Endothelial cell of umbilical vein (primary cell): ENCODE measurements at regions of chr1 and their contacts with region 1.

Region 1: GRCh38 chr1:9292361-9293240 is at the start of gene SPSB1:
- DNase-seq: peak; percentile 79
- H3K4me3 ChIP-seq: peak within 1 kb of the TSS; percentile 38 to 67 (median 64)
- H3K27ac ChIP-seq: peak within 1 kb of the TSS; percentile 54
- H3K4me1 ChIP-seq: peaks cover 15% of the 10 kb centered on the region
- H3K27me3 ChIP-seq: no peaks in the 10 kb centered on the region
- CTCF ChIP-seq: no peak
- POLR2A ChIP-seq: peak; percentile 92
- total RNA-seq, gene SPSB1: 41.9 and 50.9 TPM in 2 replicates

Region 2: GRCh38 chr1:9166289-9167235 is 126.0 kb before region 1 on chr1:
- CTCF ChIA-PET with region 1: no interaction called
- POLR2A ChIA-PET with region 1: no interaction called
- dilution Hi-C with region 1: no loop called
- intact Hi-C with region 1: no loop called
- DNase-seq: peak; percentile 69
- H3K4me3 ChIP-seq: no peak overlapping the region
- H3K27ac ChIP-seq: peak overlapping the region; percentile 99
- H3K4me1 ChIP-seq: peaks cover 39% of the 10 kb centered on the region
- H3K27me3 ChIP-seq: no peaks in the 10 kb centered on the region
- CTCF ChIP-seq: no peak
- POLR2A ChIP-seq: no peak

Region 3: GRCh38 chr1:9302745-9303524 is 10.3 kb after region 1 on chr1:
- CTCF ChIA-PET with region 1: interaction called, 12 read pairs
- POLR2A ChIA-PET with region 1: no interaction called
- dilution Hi-C with region 1: no loop called
- intact Hi-C with region 1: loop called (anchors 1 kb)
- DNase-seq: peak; percentile 83
- H3K4me3 ChIP-seq: peak overlapping the region in 1 of 3 experiments; percentile 37
- H3K27ac ChIP-seq: peak overlapping the region; percentile 93
- H3K4me1 ChIP-seq: peaks cover 27% of the 10 kb centered on the region
- H3K27me3 ChIP-seq: no peaks in the 10 kb centered on the region
- CTCF ChIP-seq: no peak
- POLR2A ChIP-seq: peak; percentile 45

Region 4: GRCh38 chr1:9371391-9371935 is 78.9 kb after region 1 on chr1:
- CTCF ChIA-PET with region 1: interaction called, 9 read pairs
- POLR2A ChIA-PET with region 1: no interaction called
- dilution Hi-C with region 1: no loop called
- intact Hi-C with region 1: loop called (anchors 1 kb)
- DNase-seq: peak; percentile 95
- H3K4me3 ChIP-seq: no peak overlapping the region
- H3K27ac ChIP-seq: peak overlapping the region; percentile 48
- H3K4me1 ChIP-seq: peaks cover 31% of the 10 kb centered on the region
- H3K27me3 ChIP-seq: no peaks in the 10 kb centered on the region
- CTCF ChIP-seq: no peak
- POLR2A ChIP-seq: no peak

Region 5: GRCh38 chr1:9438431-9439073 is 146.0 kb after region 1 on chr1:
- CTCF ChIA-PET with region 1: interaction called, 15 read pairs
- POLR2A ChIA-PET with region 1: interaction called, 3 read pairs
- dilution Hi-C with region 1: no loop called
- intact Hi-C with region 1: loop called (anchors 5 kb)
- DNase-seq: peak; percentile 95
- H3K4me3 ChIP-seq: no peak overlapping the region
- H3K27ac ChIP-seq: peak overlapping the region; percentile 50
- H3K4me1 ChIP-seq: peaks cover 49% of the 10 kb centered on the region
- H3K27me3 ChIP-seq: no peaks in the 10 kb centered on the region
- CTCF ChIP-seq: no peak
- POLR2A ChIP-seq: no peak

Region 6: DNA sequence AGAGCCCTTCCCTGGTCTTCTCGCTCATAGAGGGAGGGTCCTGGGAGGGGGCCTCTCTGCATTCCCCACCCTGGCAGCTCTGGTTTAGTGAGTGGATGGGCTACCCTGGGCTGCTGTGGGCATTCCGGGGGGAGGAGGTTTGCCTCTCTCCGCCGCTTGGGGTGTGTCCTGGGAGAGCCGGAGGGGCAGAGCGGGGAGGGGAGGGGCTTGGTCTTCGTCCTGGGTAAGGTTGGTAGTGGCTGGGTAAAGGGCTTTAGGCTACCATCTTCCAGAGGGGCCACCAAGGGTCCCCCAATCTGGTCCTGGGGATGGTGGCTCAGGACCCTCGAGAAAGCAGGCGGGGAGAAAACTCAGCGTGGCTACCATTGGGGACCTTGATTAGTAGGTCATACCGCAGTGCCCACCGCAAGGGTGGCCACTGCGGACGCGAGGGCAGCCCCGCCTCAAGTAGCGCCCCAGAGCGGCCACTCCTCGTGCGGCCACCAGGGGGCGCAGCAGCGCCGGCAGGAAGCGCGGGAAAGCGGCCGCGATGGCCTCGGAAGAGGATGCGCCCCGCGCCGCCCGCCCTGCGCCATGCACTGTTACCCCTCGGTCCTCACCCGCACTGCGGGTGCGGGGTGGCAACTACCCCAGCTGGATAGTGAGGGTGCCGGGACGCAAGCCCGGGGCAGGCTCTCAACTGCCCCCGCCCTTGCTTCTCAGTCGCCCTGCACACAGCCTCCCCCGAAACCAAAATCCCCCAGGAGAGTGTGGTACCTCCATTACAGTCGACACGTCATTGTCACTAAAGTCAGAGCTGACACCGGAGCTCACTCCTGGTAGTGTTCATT is 202.5 kb after region 1 on chr1:
- CTCF ChIA-PET with region 1: interaction called, 317 read pairs
- POLR2A ChIA-PET with region 1: no interaction called
- dilution Hi-C with region 1: no loop called
- intact Hi-C with region 1: loop called (anchors 1 kb)
- DNase-seq: peak; percentile 42
- H3K4me3 ChIP-seq: peak overlapping the region in 2 of 3 experiments; percentile 15 to 22
- H3K27ac ChIP-seq: no peak overlapping the region
- H3K4me1 ChIP-seq: no peaks in the 10 kb centered on the region
- H3K27me3 ChIP-seq: peaks cover 0 to 4% of the 10 kb centered on the region in 2 experiments
- CTCF ChIP-seq: peak; percentile 92 to 97
- POLR2A ChIP-seq: no peak

Region 7: GRCh38 chr1:9633493-9633892 is 340.9 kb after region 1 on chr1:
- CTCF ChIA-PET with region 1: no interaction called
- POLR2A ChIA-PET with region 1: no interaction called
- dilution Hi-C with region 1: no loop called
- intact Hi-C with region 1: no loop called
- DNase-seq: no peak
- H3K4me3 ChIP-seq: no peak overlapping the region
- H3K27ac ChIP-seq: no peak overlapping the region
- H3K4me1 ChIP-seq: no peaks in the 10 kb centered on the region
- H3K27me3 ChIP-seq: peaks cover 0 to 2% of the 10 kb centered on the region in 2 experiments
- CTCF ChIP-seq: no peak
- POLR2A ChIP-seq: no peak